ENCODE measurements at regions of chr2 and their contacts with region 1.

Region 1: GRCh38 chr2:66095814-66096345 is 339.0 kb upstream of the MEIS1 start:
- DNase-seq: no peak
- ATAC-seq: peak; percentile 61; the same call in 2 of the 3 replicates
- H3K4me3 ChIP-seq: no peak overlapping the region
- H3K27ac ChIP-seq: no peak overlapping the region
- H3K4me1 ChIP-seq: no peaks in the 10 kb centered on the region
- H3K27me3 ChIP-seq: no peaks in the 10 kb centered on the region
- CTCF ChIP-seq: no peak
- EP300 ChIP-seq: no peak
- POLR2A ChIP-seq: no peak
- RAD21 ChIP-seq: no peak

Region 2: DNA sequence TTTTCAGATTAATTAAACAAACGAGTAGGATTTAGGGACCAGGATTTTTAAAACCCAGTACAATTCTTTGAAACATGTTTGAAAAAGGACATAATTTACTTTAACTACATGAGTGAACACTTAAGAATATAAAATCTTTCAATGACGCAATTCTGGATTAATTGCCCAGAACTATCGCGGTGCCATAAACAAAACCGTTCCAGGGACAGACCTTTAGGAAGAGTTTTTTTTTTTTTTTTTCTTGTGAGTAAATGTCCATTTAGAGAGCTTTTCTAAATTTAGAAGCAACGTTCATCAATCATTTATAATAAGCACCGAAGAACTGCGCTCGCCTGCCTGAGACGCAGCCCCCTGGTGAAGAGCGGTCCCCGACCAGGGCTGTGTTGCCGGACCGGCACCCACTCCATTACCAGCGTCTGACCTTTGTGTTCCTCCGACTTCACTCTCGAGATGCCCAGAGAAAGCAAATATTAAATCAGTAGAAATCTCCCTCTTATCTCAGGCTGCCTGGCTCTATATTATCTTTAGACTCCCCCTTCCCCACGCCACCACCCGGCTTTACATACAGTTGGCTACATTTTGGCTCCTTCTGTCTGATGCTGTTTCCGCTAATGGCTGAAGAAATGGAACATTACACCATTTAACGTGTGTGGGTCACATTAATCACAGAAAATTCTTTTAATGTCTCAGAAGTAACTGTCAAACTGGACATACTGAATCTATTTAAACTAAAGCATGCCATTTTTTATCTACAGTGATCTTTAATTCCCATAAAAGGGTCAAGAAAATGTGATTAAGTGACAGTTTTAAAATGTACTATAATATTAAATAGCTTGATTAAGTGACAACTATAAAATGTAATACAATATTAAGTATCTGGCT is 24.9 kb before region 1 on chr2:
- CTCF ChIA-PET with region 1: no interaction called
- POLR2A ChIA-PET with region 1: no interaction called
- in situ Hi-C with region 1: no loop called
- intact Hi-C with region 1: loop called (anchors 1 kb)
- DNase-seq: no peak
- ATAC-seq: no peak
- H3K4me3 ChIP-seq: no peak overlapping the region
- H3K27ac ChIP-seq: no peak overlapping the region
- H3K4me1 ChIP-seq: no peaks in the 10 kb centered on the region
- H3K27me3 ChIP-seq: peaks cover 0 to 5% of the 10 kb centered on the region in 2 experiments; a peak in 1 of 5 replicates
- CTCF ChIP-seq: no peak
- EP300 ChIP-seq: no peak
- POLR2A ChIP-seq: no peak
- RAD21 ChIP-seq: no peak

Region 3: GRCh38 chr2:66127061-66127460 is 31.2 kb after region 1 on chr2:
- CTCF ChIA-PET with region 1: no interaction called
- POLR2A ChIA-PET with region 1: no interaction called
- in situ Hi-C with region 1: no loop called
- intact Hi-C with region 1: loop called (anchors 1 kb)
- DNase-seq: no peak
- ATAC-seq: no peak
- H3K4me3 ChIP-seq: no peak overlapping the region
- H3K27ac ChIP-seq: no peak overlapping the region
- H3K4me1 ChIP-seq: no peaks in the 10 kb centered on the region
- H3K27me3 ChIP-seq: peaks cover 0 to 7% of the 10 kb centered on the region in 2 experiments; a peak in 1 of 5 replicates
- CTCF ChIP-seq: no peak
- EP300 ChIP-seq: no peak
- POLR2A ChIP-seq: no peak
- RAD21 ChIP-seq: no peak

Measured in HepG2 (cell line).